GM13976 (cell line): ENCODE measurements at regions of chr7 and their contacts with region 1.

Region 1: DNA sequence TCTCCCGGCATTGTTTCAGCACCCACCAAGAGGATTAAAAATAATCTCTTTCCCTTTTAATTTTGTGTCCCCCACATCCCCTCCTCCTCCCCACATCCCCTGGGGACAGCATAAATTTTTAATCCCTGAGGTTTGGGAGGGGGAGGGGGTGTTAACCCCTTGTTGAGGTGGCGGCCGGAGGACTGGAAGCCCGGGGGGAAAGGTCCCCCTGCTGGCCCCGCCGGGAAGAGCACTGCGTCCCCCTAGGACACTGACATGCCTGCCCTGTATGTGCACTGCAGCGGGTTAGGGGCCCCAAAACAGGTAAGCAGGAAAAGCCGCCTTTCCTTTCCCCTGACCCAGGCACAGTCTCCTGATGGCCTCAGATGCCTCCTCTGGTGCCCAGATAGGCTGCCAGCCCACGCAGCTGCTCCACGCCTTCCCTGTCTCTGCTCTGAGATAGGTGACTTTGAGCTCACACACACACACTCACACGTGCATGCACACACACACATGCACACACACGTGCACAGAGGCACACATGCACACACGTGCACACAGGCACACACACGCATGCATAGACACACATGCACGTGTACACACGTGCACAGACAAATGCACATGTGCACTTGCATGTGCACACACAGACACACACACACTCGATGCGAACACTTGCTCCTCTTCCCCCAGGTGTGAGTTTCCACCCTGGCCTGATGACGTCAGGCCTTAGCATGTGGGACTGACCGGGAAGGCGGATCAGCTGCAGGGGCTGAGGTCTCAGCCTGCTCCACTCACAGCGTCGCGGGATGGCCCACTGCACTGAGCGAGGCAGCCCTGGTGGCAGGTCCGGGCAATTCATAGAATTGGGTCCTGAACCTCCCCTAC is 12.3 kb downstream of the CNPY1 start:
- DNase-seq: peak; percentile 85
- CTCF ChIP-seq: peak; percentile 40

Region 2: DNA sequence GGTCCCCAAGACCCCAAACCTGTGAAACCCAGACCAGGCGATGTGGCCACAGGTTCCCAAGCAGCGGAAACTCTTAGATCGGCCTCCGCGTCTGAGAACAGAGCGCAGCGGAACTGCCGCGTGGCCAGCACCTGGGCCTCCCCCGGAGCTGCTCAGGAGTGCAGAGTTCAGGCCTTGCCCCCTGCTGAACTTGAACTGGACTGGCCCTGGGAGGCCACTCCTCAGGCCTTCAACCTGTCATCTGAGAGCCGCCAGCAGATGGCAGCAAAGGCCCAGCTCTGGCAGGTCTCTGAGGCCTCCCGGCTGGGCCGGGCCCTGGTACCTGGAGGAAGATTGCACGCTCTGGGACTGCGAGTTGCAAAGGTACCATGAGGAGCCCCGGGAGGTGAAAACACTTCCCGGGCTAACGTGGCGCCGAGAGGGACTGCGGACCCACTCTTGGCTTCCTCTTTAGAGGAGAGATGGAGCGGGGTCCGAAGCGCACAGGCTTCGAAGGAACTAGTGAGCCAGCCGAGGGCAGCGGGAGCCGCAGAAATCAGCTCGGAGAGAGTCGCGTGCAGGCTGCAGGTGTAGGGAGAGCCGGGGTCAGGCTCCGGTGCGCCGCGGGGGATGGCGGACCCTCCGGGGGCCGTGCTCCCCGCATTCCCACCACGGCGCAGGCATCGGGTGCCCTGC is 620.3 kb before region 1 on chr7:
- in situ Hi-C with region 1: loop called (anchors 25 kb)
- DNase-seq: peak; percentile 89
- CTCF ChIP-seq: peak; percentile 85

Region 3: GRCh38 chr7:155283565-155284194 is 250.4 kb before region 1 on chr7:
- in situ Hi-C with region 1: no loop called
- DNase-seq: no peak
- CTCF ChIP-seq: no peak

Region 4: DNA sequence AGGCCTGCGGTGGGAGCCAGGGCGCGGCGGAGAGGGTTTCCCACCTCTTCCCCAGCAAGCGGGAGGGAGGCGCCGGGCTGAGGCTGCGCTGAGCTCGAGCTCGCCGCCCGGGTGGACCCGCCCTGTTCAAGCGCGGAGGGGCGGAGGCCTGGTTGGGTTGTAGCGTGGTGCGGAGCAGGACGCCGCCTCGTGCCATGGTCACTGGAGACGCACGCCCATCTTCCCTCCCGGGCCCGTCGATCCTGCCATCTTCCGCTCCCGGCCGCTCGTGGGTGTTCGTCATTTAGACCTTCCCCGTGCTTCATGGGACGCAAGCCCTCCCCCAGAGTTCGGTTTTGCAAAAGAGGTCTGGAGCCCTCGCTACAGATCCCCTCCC is 85.4 kb before region 1 on chr7:
- in situ Hi-C with region 1: loop called (anchors 10 kb)
- DNase-seq: no peak
- CTCF ChIP-seq: no peak